ENCODE measurements at regions of chr6 and their contacts with region 1.

Region 1: DNA sequence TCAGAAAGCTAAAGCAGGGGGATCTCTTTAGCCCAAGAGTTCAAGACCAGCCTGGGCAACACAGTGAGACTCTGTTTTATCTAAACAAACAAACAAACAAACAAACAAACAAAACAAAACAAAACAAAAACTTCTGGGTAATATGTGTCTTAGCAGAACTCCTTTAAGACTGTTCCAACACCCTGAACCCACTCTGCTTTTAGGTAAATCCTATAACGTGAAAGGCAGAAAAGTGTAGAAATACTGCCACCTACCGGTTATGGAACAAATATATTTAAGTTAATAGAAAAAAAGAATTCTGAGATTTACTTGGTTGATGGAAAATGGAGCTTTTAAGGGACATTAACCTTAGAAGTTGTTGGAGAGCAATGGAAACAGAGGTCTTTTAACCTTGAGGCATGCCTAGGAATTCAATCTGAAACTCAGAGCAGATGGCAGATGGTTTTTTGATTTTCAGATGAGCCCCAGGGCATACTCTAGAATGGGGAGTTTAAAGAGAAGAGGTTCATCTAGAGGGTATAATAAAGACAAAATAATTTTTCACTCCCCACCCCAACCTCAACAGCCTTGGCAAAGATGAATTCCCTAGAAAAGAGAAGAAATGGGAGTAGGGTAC is 38.5 kb downstream of the SOD2 start:
- DNase-seq: no peak
- ATAC-seq: peak; percentile 52

Region 2: DNA sequence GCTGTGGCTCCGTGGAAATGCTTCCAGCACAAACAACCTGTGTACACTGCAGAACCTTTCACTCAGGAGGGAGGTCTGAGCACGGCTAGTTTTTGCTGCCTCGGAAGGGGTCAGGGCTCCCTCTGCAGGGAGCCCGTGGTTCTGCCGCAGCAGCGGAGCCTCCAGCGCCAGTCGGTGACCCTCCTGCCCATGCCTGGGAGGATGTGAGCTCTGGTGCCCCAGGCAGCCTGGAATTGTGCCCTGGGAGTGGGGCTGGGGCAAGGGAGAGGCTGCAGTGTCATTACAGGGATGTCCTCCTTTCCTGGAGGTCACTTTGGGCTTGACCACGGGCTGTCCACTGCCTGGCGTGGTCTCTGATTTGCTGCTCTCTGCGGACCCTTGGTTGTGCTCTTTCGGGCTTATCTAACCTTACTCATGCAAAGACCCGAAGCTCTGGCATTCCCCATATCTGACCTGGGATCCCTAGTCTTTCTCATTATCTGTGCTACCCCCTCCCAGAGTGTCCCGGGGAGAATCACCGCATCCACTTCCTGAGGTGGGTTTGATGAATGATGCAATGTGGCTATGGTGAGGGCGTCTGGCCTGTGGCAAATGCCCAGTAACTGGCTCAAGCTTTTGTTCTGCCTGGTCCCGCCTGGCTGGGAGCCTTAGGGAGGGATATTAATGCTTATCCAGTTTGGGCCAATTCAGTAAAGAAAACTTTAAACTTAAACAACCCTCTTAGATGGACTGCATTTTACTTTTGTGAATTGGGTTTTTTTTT is 550.2 kb before region 1 on chr6:
- intact Hi-C with region 1: no loop called
- DNase-seq: peak; percentile 85
- ATAC-seq: peak; percentile 79

Region 3: DNA sequence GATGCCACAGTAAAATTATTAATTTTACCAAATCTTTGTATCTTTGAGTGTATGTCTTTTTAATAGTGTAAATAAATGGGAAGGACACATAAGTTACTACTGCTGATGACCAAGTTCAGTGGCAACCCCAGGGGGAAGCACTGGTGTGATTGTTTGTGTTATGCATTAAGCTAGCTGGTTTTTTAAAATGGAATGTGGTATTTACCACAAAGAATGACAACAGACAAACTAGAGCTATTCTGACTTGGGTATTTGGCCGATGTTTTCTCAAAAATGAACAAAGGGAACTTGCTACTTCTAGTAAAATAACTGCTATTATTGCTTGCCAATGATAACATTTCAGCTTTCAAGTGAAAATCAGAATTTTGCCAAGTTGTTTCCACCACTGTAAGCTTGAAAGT is 482.5 kb before region 1 on chr6:
- intact Hi-C with region 1: loop called (anchors 2 kb)
- DNase-seq: no peak
- ATAC-seq: no peak

Region 4: DNA sequence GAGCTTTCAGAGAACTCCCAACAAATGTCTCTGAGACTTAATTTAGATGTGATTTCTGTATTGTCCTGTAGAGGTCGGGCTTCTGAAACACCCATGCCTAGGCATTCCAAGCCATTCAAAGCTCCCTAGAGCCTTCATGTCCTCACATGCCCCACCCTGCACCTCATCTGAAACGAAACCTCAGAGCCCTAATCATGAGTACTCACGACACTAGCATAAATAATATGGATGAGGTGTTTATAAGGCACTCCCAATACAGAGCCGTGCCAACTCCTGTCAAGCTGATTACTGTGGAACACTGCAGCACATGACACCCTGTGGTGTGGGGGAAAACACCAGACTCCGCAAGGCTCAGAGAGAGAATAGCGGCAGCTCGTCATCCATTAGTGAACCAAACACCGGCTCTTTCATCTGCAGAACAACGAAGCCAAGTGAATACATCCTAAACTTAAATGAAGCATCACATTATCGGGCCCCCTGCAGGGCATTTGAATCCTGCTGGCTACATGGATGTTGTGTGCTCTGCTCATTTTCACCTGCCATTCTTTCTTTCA is 401.6 kb before region 1 on chr6:
- intact Hi-C with region 1: loop called (anchors 10 kb)
- DNase-seq: no peak
- ATAC-seq: peak; percentile 33

Measured in Right ventricle myocardium inferior (tissue), 1 donor.